ENCODE measurements at regions of chr3 and their contacts with region 1.

Region 1: DNA sequence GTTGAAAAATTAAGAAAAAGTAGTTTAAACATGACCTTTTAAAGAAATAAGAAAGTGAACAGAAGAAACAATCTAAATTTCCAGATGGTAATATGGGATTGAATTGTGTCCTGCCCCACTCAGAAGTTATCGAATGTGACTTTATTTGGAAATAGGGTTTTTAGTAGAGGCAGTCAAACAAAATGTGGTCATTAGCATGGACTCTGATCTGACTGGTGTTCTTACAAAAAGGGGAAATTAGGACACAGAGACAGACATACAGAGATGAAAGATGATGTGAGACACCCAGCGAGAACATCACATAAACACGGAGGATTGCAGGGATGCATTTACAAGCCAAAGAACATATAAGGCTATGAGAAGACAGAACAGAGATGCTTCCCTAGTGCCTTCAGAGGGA is 73.2 kb downstream of the XRN1 start:
- DNase-seq: no peak
- ATAC-seq: no peak
- H3K4me3 ChIP-seq: no peak overlapping the region
- H3K27ac ChIP-seq: no peak overlapping the region
- H3K4me1 ChIP-seq: no peaks in the 10 kb centered on the region
- H3K27me3 ChIP-seq: no peaks in the 10 kb centered on the region
- CTCF ChIP-seq: no peak

Region 2: GRCh38 chr3:142363936-142364467 is 10.7 kb before region 1 on chr3:
- intact Hi-C with region 1: no loop called
- DNase-seq: no peak
- ATAC-seq: no peak
- H3K4me3 ChIP-seq: no peak overlapping the region
- H3K27ac ChIP-seq: no peak overlapping the region
- H3K4me1 ChIP-seq: no peaks in the 10 kb centered on the region
- H3K27me3 ChIP-seq: no peaks in the 10 kb centered on the region
- CTCF ChIP-seq: no peak

Region 3: DNA sequence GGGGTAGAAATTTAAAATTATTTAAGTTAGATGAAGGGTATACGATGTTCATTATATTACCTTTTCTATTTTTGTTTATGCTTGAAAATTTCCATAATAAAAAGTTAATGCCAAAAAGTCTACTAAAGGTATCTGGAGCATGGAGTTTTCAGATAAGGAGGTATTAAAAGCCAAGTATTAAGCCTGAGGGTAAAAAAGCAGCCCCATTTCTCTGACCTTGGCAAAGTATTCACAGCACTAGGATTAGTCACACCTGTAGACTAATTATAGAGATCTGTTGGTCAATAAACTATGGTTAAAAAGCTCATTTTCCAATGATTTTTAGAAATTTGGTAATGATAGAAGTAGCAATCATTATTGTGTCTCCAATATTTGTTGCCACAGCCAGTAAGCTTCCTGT is 50.1 kb after region 1 on chr3:
- intact Hi-C with region 1: loop called in 1 of 2 experiments (anchors 5 kb)
- DNase-seq: no peak
- ATAC-seq: no peak
- H3K4me3 ChIP-seq: no peak overlapping the region
- H3K27ac ChIP-seq: no peak overlapping the region
- H3K4me1 ChIP-seq: no peaks in the 10 kb centered on the region
- H3K27me3 ChIP-seq: no peaks in the 10 kb centered on the region
- CTCF ChIP-seq: no peak

Region 4: DNA sequence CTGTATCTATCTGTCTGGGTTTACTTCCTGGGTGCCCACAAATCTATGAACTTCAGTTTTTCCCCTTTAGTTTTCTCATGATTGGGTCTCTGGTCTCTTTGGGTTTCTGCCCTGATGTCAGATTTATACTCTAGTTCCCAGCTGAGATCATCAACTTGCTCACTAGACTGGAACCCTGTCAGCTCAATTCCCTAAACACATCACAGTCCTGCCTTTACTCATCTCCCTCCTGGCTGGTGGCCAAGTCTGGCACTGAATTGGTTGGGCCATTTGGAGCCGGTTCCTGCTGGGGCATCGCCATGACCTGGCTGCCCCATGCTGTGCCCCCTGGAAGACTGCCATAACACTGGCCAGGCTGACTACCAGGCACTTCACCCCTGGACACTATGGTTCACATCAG is 1090.2 kb after region 1 on chr3:
- intact Hi-C with region 1: no loop called
- DNase-seq: peak; percentile 19 to 56
- ATAC-seq: no peak
- H3K4me3 ChIP-seq: no peak overlapping the region
- H3K27ac ChIP-seq: no peak overlapping the region
- H3K4me1 ChIP-seq: no peaks in the 10 kb centered on the region
- H3K27me3 ChIP-seq: no peaks in the 10 kb centered on the region
- CTCF ChIP-seq: no peak